Activated T-helper 1 cell treated with anti-CD3 and anti-CD28 coated beads, Interleukin-12 subunit alpha, Interleukin-12 subunit beta, Interleukin-2, Interleukin-4 antibody, amounts not matched to agents 30 ng/mL and 10 ng/mL and 1 ng/mL, durations not matched to agents 14 hours and 24 hours and 36 hours (primary cell): ENCODE measurements at regions of chr18 and their contacts with region 1.

Region 1: GRCh38 chr18:2687390-2688001 is 32.0 kb downstream of the SMCHD1 start:
- DNase-seq: no peak
- H3K4me3 Mint-ChIP-seq: peak overlapping the region; percentile 11
- H3K27ac Mint-ChIP-seq: peak overlapping the region; percentile 92
- H3K4me1 Mint-ChIP-seq: peaks cover 64% of the 10 kb centered on the region
- H3K27me3 Mint-ChIP-seq: no peaks in the 10 kb centered on the region

Region 2: GRCh38 chr18:1895456-1896185 is 791.9 kb before region 1 on chr18:
- intact Hi-C with region 1: no loop called
- DNase-seq: no peak
- H3K4me3 Mint-ChIP-seq: no peak overlapping the region
- H3K27ac Mint-ChIP-seq: no peak overlapping the region
- H3K4me1 Mint-ChIP-seq: no peaks in the 10 kb centered on the region
- H3K27me3 Mint-ChIP-seq: no peaks in the 10 kb centered on the region

Region 3: DNA sequence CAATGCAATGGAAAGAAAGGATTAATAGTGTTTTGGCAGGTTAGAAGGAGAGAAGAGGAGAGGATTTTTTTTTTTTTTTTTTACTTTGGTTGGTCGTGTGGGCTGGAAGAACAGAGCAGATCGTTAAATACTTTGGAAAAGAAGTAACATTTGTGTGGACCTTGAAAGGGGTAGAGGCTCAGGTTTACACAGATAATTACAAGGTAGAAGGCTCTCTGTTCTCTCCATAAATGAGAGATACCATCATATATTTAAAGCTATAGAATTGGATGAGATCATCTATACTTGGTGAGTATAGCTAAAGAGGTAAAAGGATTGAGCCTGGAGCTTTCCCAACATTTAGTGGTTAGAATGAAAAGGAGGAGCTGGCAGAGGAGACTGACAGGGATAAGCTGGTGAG is 17.0 kb after region 1 on chr18:
- intact Hi-C with region 1: loop called (anchors 2 kb)
- DNase-seq: no peak
- H3K4me3 Mint-ChIP-seq: no peak overlapping the region
- H3K27ac Mint-ChIP-seq: peak overlapping the region; percentile 1
- H3K4me1 Mint-ChIP-seq: peaks cover 24% of the 10 kb centered on the region
- H3K27me3 Mint-ChIP-seq: no peaks in the 10 kb centered on the region

Region 4: DNA sequence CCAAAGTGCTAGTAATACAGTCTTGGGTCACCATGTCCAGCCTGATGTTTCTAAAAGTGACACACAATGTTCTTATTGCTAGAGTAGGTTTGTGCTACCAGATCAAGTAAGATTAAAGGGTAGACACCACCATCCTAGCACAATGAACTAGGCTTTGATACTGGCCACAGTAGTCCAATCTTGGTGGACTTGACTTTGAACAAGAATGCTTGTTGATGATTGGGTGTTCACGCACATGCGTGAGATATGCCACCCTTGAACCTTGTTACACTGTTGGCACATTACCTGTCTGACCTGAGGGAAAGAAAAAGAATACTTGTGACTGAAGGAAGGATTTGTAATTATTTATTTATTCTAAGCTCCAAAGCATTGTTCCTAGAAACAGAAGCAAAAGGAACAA is 87.2 kb after region 1 on chr18:
- intact Hi-C with region 1: loop called (anchors 5 kb)
- DNase-seq: no peak
- H3K4me3 Mint-ChIP-seq: no peak overlapping the region
- H3K27ac Mint-ChIP-seq: no peak overlapping the region
- H3K4me1 Mint-ChIP-seq: peaks cover 14% of the 10 kb centered on the region
- H3K27me3 Mint-ChIP-seq: no peaks in the 10 kb centered on the region